ENCODE measurements at regions of chr9 and their contacts with region 1.

Region 1: GRCh38 chr9:4984621-4985385 is at the start of gene JAK2:
- DNase-seq: peak; percentile 90 to 93
- ATAC-seq: peak; percentile 93 to 98 (median 96)
- H3K4me3 ChIP-seq: peak within 1 kb of the TSS; percentile 70 to 95 (median 84)
- H3K27ac ChIP-seq: peak within 1 kb of the TSS; percentile 92 to 99 (median 98)
- H3K4me1 ChIP-seq: peaks cover 0 to 70% (median 38%) of the 10 kb centered on the region in 9 donors
- H3K27me3 ChIP-seq: no peaks in the 10 kb centered on the region
- CTCF ChIP-seq: peak in 8 of 9 donors; percentile 17 to 79 (median 52)
- total RNA-seq, gene JAK2: 7.0 to 95.6 (median 44.8) TPM

Region 2: DNA sequence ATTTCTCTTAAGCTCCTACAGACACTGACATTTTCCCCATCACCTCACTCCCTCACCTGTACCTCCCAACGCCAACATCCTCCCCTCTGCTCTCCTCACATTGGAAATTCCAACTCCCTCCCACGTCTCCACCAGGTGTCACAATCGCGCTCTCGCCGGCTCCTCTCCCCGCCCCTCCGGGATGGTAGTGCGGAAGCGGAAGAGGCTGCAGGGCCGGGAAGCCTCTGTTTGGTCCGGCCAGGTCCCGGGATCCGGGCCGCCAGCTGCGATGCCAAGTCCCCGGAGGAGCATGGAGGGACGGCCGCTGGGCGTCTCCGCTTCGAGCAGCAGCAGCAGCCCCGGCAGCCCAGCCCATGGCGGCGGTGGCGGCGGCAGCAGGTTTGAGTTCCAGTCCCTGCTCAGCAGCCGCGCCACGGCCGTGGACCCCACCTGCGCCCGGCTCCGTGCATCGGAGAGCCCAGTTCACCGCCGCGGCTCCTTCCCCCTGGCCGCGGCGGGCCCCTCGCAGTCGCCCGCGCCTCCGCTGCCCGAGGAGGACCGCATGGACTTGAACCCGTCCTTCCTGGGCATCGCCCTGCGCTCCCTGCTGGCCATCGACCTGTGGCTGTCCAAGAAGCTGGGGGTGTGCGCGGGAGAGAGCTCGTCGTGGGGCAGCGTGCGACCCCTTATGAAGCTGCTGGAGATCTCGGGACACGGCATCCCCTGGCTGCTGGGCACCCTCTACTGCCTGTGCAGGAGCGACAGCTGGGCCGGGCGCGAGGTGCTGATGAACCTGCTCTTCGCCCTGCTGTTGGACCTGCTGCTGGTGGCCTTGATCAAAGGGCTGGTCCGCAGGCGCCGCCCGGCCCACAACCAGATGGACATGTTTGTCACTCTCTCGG is 322.5 kb before region 1 on chr9 and contains the start of gene PLPP6:
- intact Hi-C with region 1: loop called in 1 of 10 experiments (anchors 10 kb)
- DNase-seq: peak; percentile 88 to 89
- ATAC-seq: peak; percentile 94 to 97 (median 95)
- H3K4me3 ChIP-seq: peak within 1 kb of the TSS; percentile 75 to 97 (median 90)
- H3K27ac ChIP-seq: peak within 1 kb of the TSS; percentile 30 to 91 (median 84)
- H3K4me1 ChIP-seq: peaks cover 0 to 56% (median 43%) of the 10 kb centered on the region in 9 donors
- H3K27me3 ChIP-seq: no peaks in the 10 kb centered on the region
- CTCF ChIP-seq: peak; percentile 24 to 74 (median 58)
- total RNA-seq, gene PLPP6: 2.2 to 4.1 (median 2.6) TPM

Region 3: DNA sequence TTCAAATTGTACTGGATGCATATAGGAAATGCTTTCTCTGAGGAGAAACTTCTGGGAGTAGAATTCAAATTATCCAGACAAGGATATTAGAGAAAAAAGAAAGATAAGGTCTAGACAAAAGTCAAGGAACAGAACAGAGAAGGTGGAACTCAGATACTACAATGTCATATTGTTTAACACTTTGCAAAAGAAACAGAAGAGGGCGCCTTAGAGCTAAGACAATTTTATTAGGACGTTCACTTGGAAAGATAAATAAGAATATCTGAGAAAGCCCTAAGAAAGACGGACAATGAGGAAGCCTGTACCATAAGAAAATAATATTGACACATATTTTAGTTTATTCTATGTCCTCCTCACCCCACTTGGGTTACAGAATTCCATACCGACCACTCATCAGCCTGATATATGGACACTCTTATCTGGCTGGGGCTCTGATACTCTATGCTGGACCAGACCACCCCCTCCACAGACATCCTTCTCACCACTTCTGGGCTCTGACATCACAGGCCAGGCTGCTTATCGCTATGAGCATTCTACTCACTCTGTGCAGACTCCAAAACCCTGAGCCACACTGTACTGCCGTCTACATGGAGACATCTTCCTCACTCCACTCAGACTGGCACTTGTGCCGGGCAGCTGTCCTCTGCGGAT is 234.7 kb before region 1 on chr9:
- intact Hi-C with region 1: loop called in 1 of 10 experiments (anchors 5 kb)
- DNase-seq: no peak
- ATAC-seq: peak in 7 of 8 donors; percentile 41 to 74 (median 62)
- H3K4me3 ChIP-seq: no peak overlapping the region
- H3K27ac ChIP-seq: no peak overlapping the region
- H3K4me1 ChIP-seq: peaks cover 0 to 7% (median 2%) of the 10 kb centered on the region in 9 donors
- H3K27me3 ChIP-seq: no peaks in the 10 kb centered on the region
- CTCF ChIP-seq: peak in 8 of 9 donors; percentile 24 to 73 (median 64)

Region 4: DNA sequence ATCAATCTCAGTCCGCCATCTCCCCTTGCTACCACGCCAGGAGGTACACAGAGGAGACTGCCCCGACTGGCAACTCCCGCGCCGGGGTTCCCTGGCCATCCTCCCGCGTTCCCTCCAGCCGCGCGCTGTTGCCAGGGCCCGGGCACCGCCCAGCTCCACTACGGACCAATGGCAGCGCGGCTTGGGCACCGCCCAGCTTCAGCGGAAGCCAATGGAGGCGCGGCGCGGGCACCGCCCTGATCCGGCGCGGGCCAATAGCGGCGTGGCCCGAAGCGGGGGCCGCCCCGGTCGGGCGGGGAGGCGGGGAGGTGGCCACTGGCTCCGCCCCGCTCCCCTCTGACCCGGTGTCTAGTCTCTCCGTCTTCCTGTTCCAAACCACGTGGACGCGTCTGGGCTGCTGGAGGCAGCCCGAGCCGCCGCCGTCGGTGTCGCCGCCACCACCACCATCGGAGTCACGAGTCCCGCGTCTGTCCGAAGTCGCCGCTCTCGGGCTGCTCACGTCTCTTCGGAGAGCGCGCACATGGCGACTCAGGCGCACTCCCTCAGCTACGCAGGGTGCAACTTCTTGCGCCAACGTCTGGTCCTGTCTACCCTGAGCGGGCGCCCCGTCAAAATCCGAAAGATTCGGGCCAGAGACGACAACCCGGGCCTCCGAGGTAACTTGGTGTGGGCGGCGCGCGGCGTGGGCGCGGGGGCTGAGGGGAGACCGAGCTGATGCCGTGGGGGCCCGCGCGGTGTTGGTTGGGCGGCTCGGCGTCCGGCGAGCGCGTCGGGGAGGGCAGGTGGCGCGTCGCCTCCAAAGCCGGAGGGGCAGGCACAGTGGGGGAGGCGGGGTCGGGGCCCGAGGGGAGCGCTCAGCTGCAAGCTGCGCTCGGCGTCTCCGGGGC is 192.0 kb before region 1 on chr9 and contains the start of gene RCL1:
- intact Hi-C with region 1: loop called in 7 of 10 experiments (anchors 2 to 10 kb)
- DNase-seq: peak; percentile 93 to 97
- ATAC-seq: peak; percentile 99 to 100 (median 99)
- H3K4me3 ChIP-seq: peak within 1 kb of the TSS; percentile 69 to 97 (median 82)
- H3K27ac ChIP-seq: peak within 1 kb of the TSS; percentile 42 to 87 (median 84)
- H3K4me1 ChIP-seq: peaks cover 0 to 32% (median 20%) of the 10 kb centered on the region in 9 donors
- H3K27me3 ChIP-seq: peaks cover 0 to 2% (median 0%) of the 10 kb centered on the region in 7 donors
- CTCF ChIP-seq: no peak
- total RNA-seq, gene RCL1: 4.8 to 9.9 (median 6.8) TPM

Region 5: DNA sequence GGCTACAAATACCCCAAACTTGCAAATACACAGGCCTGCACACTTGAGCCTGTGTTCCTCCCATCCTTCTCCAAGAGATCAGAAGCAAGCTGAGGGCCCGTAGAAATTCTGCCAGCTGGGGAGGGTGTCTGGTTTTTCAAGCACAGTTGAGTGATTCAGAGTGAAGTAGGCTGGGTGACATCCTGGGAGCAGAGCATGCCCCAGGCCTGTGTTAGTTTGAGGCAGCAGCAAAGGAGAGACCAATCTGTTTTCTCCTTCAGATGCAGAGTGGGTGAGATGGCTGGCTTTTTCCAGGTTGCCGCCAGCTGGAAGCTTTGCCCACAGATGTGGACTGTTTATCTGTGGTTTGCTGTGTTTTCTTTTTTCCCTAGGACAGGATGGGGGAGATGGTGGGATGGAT is 129.0 kb before region 1 on chr9:
- intact Hi-C with region 1: loop called in 1 of 10 experiments (anchors 10 kb)
- DNase-seq: no peak
- ATAC-seq: peak in 4 of 8 donors; percentile 27 to 71 (median 42)
- H3K4me3 ChIP-seq: no peak overlapping the region
- H3K27ac ChIP-seq: peak overlapping the region in 1 of 10 donors; percentile 2
- H3K4me1 ChIP-seq: peaks cover 0 to 9% (median 0%) of the 10 kb centered on the region in 9 donors
- H3K27me3 ChIP-seq: no peaks in the 10 kb centered on the region
- CTCF ChIP-seq: no peak

Region 6: GRCh38 chr9:5025416-5025815 is 40.6 kb after region 1 on chr9:
- intact Hi-C with region 1: no loop called
- DNase-seq: no peak
- ATAC-seq: no peak
- H3K4me3 ChIP-seq: no peak overlapping the region
- H3K27ac ChIP-seq: no peak overlapping the region
- H3K4me1 ChIP-seq: peaks cover 0 to 5% (median 0%) of the 10 kb centered on the region in 9 donors
- H3K27me3 ChIP-seq: no peaks in the 10 kb centered on the region
- CTCF ChIP-seq: no peak

Region 7: DNA sequence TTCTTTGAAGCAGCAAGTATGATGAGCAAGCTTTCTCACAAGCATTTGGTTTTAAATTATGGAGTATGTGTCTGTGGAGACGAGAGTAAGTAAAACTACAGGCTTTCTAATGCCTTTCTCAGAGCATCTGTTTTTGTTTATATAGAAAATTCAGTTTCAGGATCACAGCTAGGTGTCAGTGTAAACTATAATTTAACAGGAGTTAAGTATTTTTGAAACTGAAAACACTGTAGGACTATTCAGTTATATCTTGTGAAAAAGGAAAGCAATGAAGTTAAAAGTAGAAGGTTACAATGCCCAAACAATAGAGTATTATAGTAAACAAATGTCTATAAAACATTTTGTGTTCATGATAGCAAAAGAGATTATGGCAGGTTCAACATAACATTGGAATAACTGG is 88.9 kb after region 1 on chr9:
- intact Hi-C with region 1: loop called in 1 of 10 experiments (anchors 10 kb)
- DNase-seq: no peak
- ATAC-seq: no peak
- H3K4me3 ChIP-seq: no peak overlapping the region
- H3K27ac ChIP-seq: no peak overlapping the region
- H3K4me1 ChIP-seq: peaks cover 0 to 6% (median 0%) of the 10 kb centered on the region in 9 donors
- H3K27me3 ChIP-seq: no peaks in the 10 kb centered on the region
- CTCF ChIP-seq: no peak

Region 8: DNA sequence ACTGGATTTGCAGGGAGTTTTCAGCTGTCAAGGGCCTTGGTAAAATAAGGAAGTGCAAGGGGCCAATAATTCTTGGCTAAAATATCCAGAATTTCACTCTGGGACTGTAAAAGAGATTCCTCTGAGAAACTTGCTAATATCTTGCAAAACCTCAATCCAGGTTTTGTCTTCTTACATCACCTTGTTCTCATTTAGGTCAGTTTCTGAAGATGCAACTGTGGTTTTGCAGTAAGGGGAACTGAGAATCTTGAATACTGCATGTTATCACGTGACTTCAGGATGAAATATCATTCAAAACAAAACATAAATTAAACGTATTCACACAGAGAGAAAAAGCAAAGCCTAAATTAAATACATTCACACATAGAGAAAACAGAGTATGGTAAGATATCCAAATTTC is 609.1 kb after region 1 on chr9:
- intact Hi-C with region 1: loop called in 1 of 10 experiments (anchors 10 kb)
- DNase-seq: no peak
- ATAC-seq: no peak
- H3K4me3 ChIP-seq: no peak overlapping the region
- H3K27ac ChIP-seq: no peak overlapping the region
- H3K4me1 ChIP-seq: peaks cover 0 to 20% (median 4%) of the 10 kb centered on the region in 9 donors
- H3K27me3 ChIP-seq: no peaks in the 10 kb centered on the region
- CTCF ChIP-seq: no peak

Region 9: DNA sequence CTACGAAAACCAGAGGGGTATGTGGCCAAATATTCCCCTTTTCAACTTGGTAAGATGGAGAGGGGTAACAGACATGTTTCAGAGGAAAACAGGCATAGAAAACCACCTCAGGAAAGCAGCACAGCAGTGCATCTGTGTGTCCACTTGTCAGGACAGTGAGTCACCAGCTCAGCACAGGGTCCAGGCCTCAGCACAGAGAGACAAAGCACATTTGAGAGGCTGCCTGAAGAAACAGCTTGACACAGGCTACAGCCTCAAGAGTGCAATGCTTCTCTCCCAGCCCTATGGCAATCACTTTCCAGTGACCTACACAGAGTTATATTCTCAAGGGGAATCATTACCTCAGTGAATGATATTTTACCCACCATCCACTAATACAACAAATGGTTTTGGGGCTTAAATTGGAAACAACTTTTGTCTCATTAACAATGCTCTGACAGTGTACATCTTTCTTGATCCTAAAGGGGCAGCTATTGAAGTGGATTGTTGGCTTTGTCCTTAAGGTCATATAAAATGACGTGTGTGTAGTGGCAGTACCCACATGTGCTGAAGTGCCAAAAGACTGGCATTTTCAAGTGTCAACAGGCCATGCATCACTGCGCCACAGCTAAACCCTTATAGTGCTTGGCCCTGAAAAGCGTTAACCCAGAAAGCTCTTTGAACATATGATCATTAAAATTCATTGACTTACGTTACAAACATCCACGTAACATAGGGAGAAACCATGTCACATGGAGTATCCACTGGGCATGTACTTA is 801.7 kb after region 1 on chr9:
- intact Hi-C with region 1: no loop called
- DNase-seq: no peak
- ATAC-seq: peak in 7 of 8 donors; percentile 40 to 84 (median 68)
- H3K4me3 ChIP-seq: no peak overlapping the region
- H3K27ac ChIP-seq: peak overlapping the region in 2 of 10 donors; percentile 33 to 41
- H3K4me1 ChIP-seq: peaks cover 0 to 25% (median 8%) of the 10 kb centered on the region in 9 donors
- H3K27me3 ChIP-seq: no peaks in the 10 kb centered on the region
- CTCF ChIP-seq: no peak